A673 (cell line): ENCODE measurements at regions of chr17 and their contacts with region 1.

Region 1: DNA sequence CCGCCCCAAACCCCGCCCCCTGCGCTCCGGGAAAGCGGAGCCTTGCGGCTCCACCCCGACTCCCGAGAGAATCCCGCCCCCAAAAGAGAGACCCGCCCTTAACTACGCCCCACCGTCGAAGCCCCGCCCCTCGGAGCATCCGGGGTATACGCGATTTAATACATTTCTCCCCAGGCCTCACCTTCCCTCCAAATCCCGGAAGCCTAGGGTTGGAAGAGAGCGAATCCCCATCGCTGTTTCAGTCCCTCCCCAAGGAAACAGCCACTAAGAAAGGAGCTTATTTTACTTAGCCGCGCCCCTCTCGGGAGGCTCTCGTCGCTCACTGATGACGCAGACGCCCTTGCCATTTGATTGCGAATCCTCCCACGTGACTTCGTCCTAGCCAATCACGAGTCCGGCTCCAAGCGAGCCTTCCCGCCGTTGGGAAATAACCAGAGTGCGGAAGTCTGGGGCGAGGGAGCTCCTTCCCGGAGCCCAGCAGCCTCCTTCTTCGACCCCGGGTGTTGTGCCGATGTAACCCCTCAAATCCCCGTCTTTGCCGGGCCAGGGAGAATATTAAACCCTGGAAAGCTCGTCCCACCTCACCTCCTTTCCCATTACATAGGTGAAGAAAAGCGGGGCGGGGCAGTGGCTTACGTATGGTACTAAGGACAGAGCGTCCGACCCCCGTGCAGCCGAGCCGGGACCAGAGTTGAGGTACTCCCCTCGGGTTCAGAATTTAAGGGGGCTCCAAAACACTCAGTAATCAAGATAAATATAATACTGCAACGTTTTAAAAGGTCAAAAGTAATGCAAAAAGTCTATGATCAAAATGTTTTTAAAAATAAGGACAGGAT is 462 bp upstream of the FDXR start:
- DNase-seq: peak; percentile 100
- H3K4me3 ChIP-seq: peak overlapping the region; percentile 77
- H3K27ac ChIP-seq: peak overlapping the region; percentile 90
- H3K4me1 ChIP-seq: peaks cover 23% of the 10 kb centered on the region
- H3K27me3 ChIP-seq: no peaks in the 10 kb centered on the region
- CTCF ChIP-seq: no peak

Region 2: GRCh38 chr17:74790161-74791054 is 82.8 kb before region 1 on chr17:
- CTCF ChIA-PET with region 1: no interaction called
- POLR2A ChIA-PET with region 1: interaction called, 12 read pairs
- intact Hi-C with region 1: no loop called
- DNase-seq: peak; percentile 30
- H3K4me3 ChIP-seq: no peak overlapping the region
- H3K27ac ChIP-seq: no peak overlapping the region
- H3K4me1 ChIP-seq: no peaks in the 10 kb centered on the region
- H3K27me3 ChIP-seq: no peaks in the 10 kb centered on the region
- CTCF ChIP-seq: no peak

Region 3: GRCh38 chr17:74822939-74823367 is 50.3 kb before region 1 on chr17:
- CTCF ChIA-PET with region 1: interaction called, 12 read pairs
- POLR2A ChIA-PET with region 1: no interaction called
- intact Hi-C with region 1: no loop called
- DNase-seq: peak; percentile 93
- H3K4me3 ChIP-seq: no peak overlapping the region
- H3K27ac ChIP-seq: peak overlapping the region; percentile 94
- H3K4me1 ChIP-seq: peaks cover 65% of the 10 kb centered on the region
- H3K27me3 ChIP-seq: no peaks in the 10 kb centered on the region
- CTCF ChIP-seq: no peak